Endothelial cell of umbilical vein (primary cell): ENCODE measurements at regions of chr15 and their contacts with region 1.

Region 1: GRCh38 chr15:65841121-65841925 is 28.0 kb upstream of the RAB11A start:
- DNase-seq: peak; percentile 67
- H3K4me3 ChIP-seq: no peak overlapping the region
- H3K27ac ChIP-seq: peak overlapping the region; percentile 55
- H3K4me1 ChIP-seq: peaks cover 35% of the 10 kb centered on the region
- H3K27me3 ChIP-seq: no peaks in the 10 kb centered on the region
- CTCF ChIP-seq: no peak
- POLR2A ChIP-seq: no peak

Region 2: DNA sequence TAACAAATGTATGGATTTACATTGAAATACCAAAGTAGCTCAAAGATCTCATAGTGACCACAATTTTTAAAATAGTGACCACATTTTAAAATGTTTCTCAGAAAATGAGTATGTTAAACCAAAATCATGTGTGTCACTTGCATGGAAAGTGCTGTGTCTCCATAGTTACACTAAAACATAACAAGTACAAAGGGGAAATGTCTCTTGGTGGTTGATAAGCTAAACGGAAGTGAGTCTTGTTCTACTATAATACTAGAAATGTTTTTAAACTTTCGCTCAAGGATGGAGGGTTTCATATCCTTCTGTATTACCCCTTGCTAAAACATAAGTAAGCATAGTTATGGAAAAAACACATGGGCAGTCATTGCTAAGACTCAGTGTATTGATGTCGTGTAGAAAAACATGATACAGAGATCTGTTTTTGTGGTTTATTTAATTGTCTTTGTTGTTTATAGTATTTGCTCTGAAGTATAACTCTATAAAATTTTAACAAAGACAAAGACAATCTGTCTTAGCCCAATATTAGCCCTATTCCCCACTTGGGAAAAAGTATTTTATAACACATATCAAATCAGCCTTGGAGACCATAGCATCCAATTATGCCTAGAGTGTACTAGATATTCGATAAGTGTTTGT is 22.3 kb before region 1 on chr15:
- CTCF ChIA-PET with region 1: interaction called, 8 read pairs
- POLR2A ChIA-PET with region 1: no interaction called
- dilution Hi-C with region 1: no loop called
- intact Hi-C with region 1: loop called (anchors 2 kb)
- DNase-seq: peak; percentile 95
- H3K4me3 ChIP-seq: no peak overlapping the region
- H3K27ac ChIP-seq: peak overlapping the region; percentile 88
- H3K4me1 ChIP-seq: peaks cover 20% of the 10 kb centered on the region
- H3K27me3 ChIP-seq: no peaks in the 10 kb centered on the region
- CTCF ChIP-seq: no peak
- POLR2A ChIP-seq: no peak

Region 3: GRCh38 chr15:65877749-65878148 is 36.4 kb after region 1 on chr15:
- CTCF ChIA-PET with region 1: no interaction called
- POLR2A ChIA-PET with region 1: no interaction called
- dilution Hi-C with region 1: no loop called
- intact Hi-C with region 1: no loop called
- DNase-seq: no peak
- H3K4me3 ChIP-seq: no peak overlapping the region
- H3K27ac ChIP-seq: no peak overlapping the region
- H3K4me1 ChIP-seq: peaks cover 4% of the 10 kb centered on the region
- H3K27me3 ChIP-seq: no peaks in the 10 kb centered on the region
- CTCF ChIP-seq: no peak
- POLR2A ChIP-seq: no peak

Region 4: DNA sequence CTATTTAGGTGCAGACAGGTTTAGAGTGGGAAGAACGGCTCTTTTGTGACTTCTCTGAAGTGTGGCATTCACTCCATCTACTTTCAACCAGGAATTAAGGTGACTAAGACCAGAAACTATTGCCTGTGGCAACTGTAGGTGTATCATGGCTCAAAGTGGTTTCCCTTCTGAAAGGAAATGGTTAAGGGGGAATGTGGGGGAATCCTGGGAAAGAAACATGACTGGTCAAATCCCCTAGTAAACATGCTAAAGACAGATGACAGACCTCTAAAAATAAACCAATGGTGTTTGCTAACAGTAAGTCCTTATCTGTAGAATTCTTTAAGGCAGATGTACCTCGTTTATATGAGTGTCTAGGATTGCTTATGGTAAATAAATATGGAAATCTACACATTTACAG is 355.3 kb after region 1 on chr15:
- CTCF ChIA-PET with region 1: no interaction called
- POLR2A ChIA-PET with region 1: no interaction called
- dilution Hi-C with region 1: no loop called
- intact Hi-C with region 1: no loop called
- DNase-seq: no peak
- H3K4me3 ChIP-seq: no peak overlapping the region
- H3K27ac ChIP-seq: no peak overlapping the region
- H3K4me1 ChIP-seq: no peaks in the 10 kb centered on the region
- H3K27me3 ChIP-seq: peaks cover 2 to 6% of the 10 kb centered on the region in 2 experiments
- CTCF ChIP-seq: no peak
- POLR2A ChIP-seq: no peak